HCT116 (cell line): ENCODE measurements at regions of chr6 and their contacts with region 1.

Region 1: DNA sequence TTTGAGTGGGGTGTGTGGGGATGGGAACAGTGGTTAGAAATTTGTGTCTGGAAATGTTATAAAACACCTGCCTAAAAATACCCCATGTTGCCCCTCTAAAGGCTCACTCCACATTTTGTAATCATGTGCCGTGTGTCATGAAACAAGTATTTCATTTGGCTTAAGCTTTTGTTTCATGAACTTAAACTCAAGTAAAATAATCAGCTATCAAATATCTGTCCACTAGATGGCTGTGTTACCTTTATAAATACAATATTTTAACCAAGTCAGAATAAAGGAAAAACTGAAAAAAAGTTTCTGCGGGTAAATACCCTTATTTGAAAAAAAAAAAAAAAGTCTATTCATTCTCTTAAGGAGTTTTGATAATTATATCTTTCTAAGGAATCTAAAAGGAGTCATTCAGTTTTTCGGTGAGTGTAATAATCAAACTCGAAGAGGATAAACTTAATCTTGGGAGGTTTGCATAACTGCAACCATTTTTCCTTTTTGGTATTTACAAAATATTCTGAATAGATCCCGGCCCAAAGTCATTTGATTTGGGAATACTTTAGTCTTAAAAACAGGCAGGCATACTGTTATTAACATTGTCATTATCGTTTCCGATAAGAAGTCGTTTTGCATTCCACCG is 29.9 kb upstream of the MTRF1L start:
- DNase-seq: peak; percentile 27
- ATAC-seq: peak; percentile 60; the same call in 1 of the 2 replicates
- H3K4me3 ChIP-seq: no peak overlapping the region
- H3K27ac ChIP-seq: no peak overlapping the region
- H3K4me1 ChIP-seq: no peaks in the 10 kb centered on the region
- H3K27me3 ChIP-seq: no peaks in the 10 kb centered on the region
- CTCF ChIP-seq: peak; percentile 24 to 61 (median 50); a peak in 3 of 6 replicates
- POLR2A ChIP-seq: no peak
- RAD21 ChIP-seq: peak; percentile 66

Region 2: GRCh38 chr6:153312641-153313040 is 280.3 kb after region 1 on chr6:
- CTCF ChIA-PET with region 1: interaction called, 11 read pairs
- POLR2A ChIA-PET with region 1: no interaction called
- RAD21 ChIA-PET with region 1: no interaction called
- intact Hi-C with region 1: loop called (anchors 2 kb)
- DNase-seq: peak; percentile 49
- ATAC-seq: peak; percentile 81
- H3K4me3 ChIP-seq: no peak overlapping the region
- H3K27ac ChIP-seq: no peak overlapping the region
- H3K4me1 ChIP-seq: no peaks in the 10 kb centered on the region
- H3K27me3 ChIP-seq: peaks cover 56% of the 10 kb centered on the region
- CTCF ChIP-seq: peak; percentile 56 to 76 (median 68); a peak in 5 of 6 replicates
- POLR2A ChIP-seq: no peak
- RAD21 ChIP-seq: peak; percentile 86

Region 3: GRCh38 chr6:153511896-153512496 is 479.6 kb after region 1 on chr6:
- CTCF ChIA-PET with region 1: no interaction called
- POLR2A ChIA-PET with region 1: no interaction called
- RAD21 ChIA-PET with region 1: no interaction called
- intact Hi-C with region 1: loop called (anchors 5 kb)
- DNase-seq: peak; percentile 8
- ATAC-seq: peak; percentile 84
- H3K4me3 ChIP-seq: no peak overlapping the region
- H3K27ac ChIP-seq: no peak overlapping the region
- H3K4me1 ChIP-seq: no peaks in the 10 kb centered on the region; a peak in 1 of 4 replicates
- H3K27me3 ChIP-seq: 0 out of 2 replicates have a peak, but pooled peaks cover 5% of the 10 kb centered on the region
- CTCF ChIP-seq: peak; percentile 33 to 58 (median 43); a peak in 4 of 6 replicates
- POLR2A ChIP-seq: no peak
- RAD21 ChIP-seq: peak; percentile 56

Region 4: DNA sequence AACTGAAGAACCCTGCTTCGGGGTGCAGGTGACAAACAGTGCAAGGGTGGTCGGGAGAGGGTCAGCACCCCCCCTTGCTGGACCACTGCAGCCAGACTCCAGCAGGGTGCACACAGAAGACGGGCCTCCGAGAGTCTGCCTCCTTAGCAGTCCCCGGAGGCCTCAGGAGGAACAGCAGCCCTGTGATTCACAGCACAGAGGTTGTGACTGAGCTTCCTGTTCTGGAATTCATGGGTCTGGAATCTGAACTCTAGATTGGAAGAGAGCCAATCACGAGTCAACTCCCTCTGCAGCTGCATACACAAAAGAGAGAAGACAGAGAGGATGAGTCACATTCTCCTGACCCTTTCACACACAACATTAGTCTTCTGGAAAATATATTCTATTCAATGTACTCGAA is 757.7 kb after region 1 on chr6:
- CTCF ChIA-PET with region 1: no interaction called
- POLR2A ChIA-PET with region 1: no interaction called
- RAD21 ChIA-PET with region 1: no interaction called
- intact Hi-C with region 1: loop called (anchors 5 kb)
- DNase-seq: peak; percentile 19
- ATAC-seq: peak; percentile 72
- H3K4me3 ChIP-seq: no peak overlapping the region
- H3K27ac ChIP-seq: no peak overlapping the region
- H3K4me1 ChIP-seq: peaks cover 0 to 13% of the 10 kb centered on the region in 2 experiments; a peak in 3 of 4 replicates
- H3K27me3 ChIP-seq: no peaks in the 10 kb centered on the region
- CTCF ChIP-seq: peak in 2 of 3 experiments; percentile 36 to 39; a peak in 3 of 6 replicates
- POLR2A ChIP-seq: no peak
- RAD21 ChIP-seq: no peak

Region 5: DNA sequence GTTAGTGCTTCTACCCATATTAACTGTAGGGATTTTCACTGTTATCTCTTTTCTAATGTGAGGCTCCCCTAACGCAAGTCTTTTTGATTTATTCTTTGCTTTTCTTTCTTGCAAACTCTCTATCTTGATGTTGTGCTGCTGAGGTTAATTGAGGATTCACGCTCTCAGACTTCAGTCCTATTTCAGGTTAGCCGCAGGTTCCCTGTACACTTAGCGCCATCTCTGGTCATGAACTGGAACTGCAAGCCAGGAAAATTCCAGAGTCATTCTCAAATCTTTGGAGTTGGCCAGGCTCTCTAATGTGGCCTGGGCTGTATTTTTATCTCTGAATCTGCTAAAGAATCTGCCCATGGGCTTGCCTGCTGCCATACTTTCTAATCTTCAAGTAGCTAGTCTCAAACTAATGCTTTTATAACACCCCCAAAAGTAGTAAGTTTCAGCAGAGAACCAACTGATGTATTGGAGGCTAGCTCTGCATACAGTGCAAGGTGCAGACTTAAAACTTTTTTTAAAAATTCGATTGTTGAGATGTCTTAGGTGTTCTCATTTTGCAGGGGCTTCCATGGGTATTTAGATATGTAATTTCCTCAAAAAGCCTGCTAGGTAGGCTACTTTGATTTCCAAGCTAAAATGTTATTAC is 915.6 kb after region 1 on chr6:
- CTCF ChIA-PET with region 1: interaction called, 4 read pairs
- POLR2A ChIA-PET with region 1: no interaction called
- RAD21 ChIA-PET with region 1: no interaction called
- intact Hi-C with region 1: loop called (anchors 5 kb)
- DNase-seq: peak; percentile 21
- ATAC-seq: peak; percentile 82
- H3K4me3 ChIP-seq: no peak overlapping the region
- H3K27ac ChIP-seq: no peak overlapping the region
- H3K4me1 ChIP-seq: no peaks in the 10 kb centered on the region
- H3K27me3 ChIP-seq: peaks cover 27% of the 10 kb centered on the region
- CTCF ChIP-seq: peak; percentile 48 to 98 (median 96); a peak in 5 of 6 replicates
- POLR2A ChIP-seq: no peak
- RAD21 ChIP-seq: peak; percentile 75